Activated CD4-positive, alpha-beta memory T cell treated with anti-CD3 and anti-CD28 coated beads, Interleukin-2, amount 10 ng/mL, durations not matched to agents 7 days and 5 days (primary cell): ENCODE measurements at regions of chr12 and their contacts with region 1.

Region 1: GRCh38 chr12:48795480-48796455 is 6.9 kb upstream of the ADCY6 start:
- DNase-seq: peak; percentile 65
- H3K4me3 Mint-ChIP-seq: no peak overlapping the region
- H3K27ac Mint-ChIP-seq: no peak overlapping the region
- H3K4me1 Mint-ChIP-seq: peaks cover 9% of the 10 kb centered on the region
- H3K27me3 Mint-ChIP-seq: peaks cover 9% of the 10 kb centered on the region

Region 2: GRCh38 chr12:48336562-48336961 is 459.2 kb before region 1 on chr12:
- CTCF ChIA-PET with region 1: no interaction called
- POLR2A ChIA-PET with region 1: no interaction called
- DNase-seq: no peak
- H3K4me3 Mint-ChIP-seq: no peak overlapping the region
- H3K27ac Mint-ChIP-seq: no peak overlapping the region
- H3K4me1 Mint-ChIP-seq: peaks cover under 1% of the 10 kb centered on the region
- H3K27me3 Mint-ChIP-seq: no peaks in the 10 kb centered on the region

Region 3: GRCh38 chr12:48542300-48542928 is 253.4 kb before region 1 on chr12:
- CTCF ChIA-PET with region 1: interaction called, 13 read pairs
- POLR2A ChIA-PET with region 1: no interaction called
- DNase-seq: peak; percentile 60
- H3K4me3 Mint-ChIP-seq: no peak overlapping the region
- H3K27ac Mint-ChIP-seq: no peak overlapping the region
- H3K4me1 Mint-ChIP-seq: peaks cover 3% of the 10 kb centered on the region
- H3K27me3 Mint-ChIP-seq: peaks cover 2% of the 10 kb centered on the region

Region 4: GRCh38 chr12:48750769-48751735 is 44.7 kb before region 1 on chr12:
- CTCF ChIA-PET with region 1: interaction called, 171 read pairs
- POLR2A ChIA-PET with region 1: interaction called, 9 read pairs
- DNase-seq: no peak
- H3K4me3 Mint-ChIP-seq: no peak overlapping the region
- H3K27ac Mint-ChIP-seq: no peak overlapping the region
- H3K4me1 Mint-ChIP-seq: peaks cover 10% of the 10 kb centered on the region
- H3K27me3 Mint-ChIP-seq: no peaks in the 10 kb centered on the region

Region 5: GRCh38 chr12:48758221-48758620 is 37.5 kb before region 1 on chr12:
- CTCF ChIA-PET with region 1: interaction called, 171 read pairs
- POLR2A ChIA-PET with region 1: interaction called, 9 read pairs
- DNase-seq: no peak
- H3K4me3 Mint-ChIP-seq: no peak overlapping the region
- H3K27ac Mint-ChIP-seq: no peak overlapping the region
- H3K4me1 Mint-ChIP-seq: no peaks in the 10 kb centered on the region
- H3K27me3 Mint-ChIP-seq: no peaks in the 10 kb centered on the region